ENCODE measurements at regions of chr11 and their contacts with region 1.

Region 1: GRCh38 chr11:64246871-64247728 is at the start of gene PPP1R14B:
- DNase-seq: peak; percentile 78
- ATAC-seq: peak; percentile 63
- H3K4me3 Mint-ChIP-seq: peak within 1 kb of the TSS; percentile 90
- H3K27ac Mint-ChIP-seq: peak within 1 kb of the TSS; percentile 87
- H3K4me1 Mint-ChIP-seq: peaks cover 43% of the 10 kb centered on the region
- H3K27me3 Mint-ChIP-seq: no peaks in the 10 kb centered on the region
- CTCF ChIP-seq: no peak
- total RNA-seq, gene PPP1R14B: 112 and 127 TPM in 2 replicates

Region 2: DNA sequence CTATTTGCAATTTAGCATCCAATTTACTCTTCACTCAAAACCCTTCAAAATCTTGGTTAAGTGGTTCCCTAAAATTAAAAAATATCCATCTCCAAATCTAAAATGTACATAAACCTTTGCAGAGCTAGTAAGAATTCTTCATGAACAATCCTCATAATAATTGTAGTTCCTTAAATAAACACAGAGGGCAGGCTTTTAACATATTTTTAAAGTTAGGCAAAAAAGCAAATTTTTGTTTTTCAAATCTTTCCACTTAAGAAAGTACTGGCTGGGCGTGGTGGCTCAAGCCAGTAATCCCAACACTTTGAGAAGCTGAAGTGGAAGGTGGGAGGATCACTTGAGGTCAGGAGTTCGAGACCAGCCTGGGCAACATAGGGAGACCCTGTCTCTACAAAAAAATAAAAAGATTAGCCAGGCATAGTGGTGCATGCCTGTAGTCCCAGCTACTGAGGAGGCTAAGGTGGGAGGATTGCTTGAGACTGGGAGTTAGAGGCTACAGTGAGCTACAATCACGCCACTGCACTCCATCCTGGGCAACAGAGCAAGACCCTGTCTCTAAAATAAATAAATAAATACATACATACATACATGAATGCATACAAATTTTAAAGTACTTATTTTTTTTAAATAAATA is 607.8 kb before region 1 on chr11:
- CTCF ChIA-PET with region 1: no interaction called
- POLR2A ChIA-PET with region 1: no interaction called
- intact Hi-C with region 1: no loop called
- DNase-seq: no peak
- ATAC-seq: no peak
- H3K4me3 Mint-ChIP-seq: no peak overlapping the region
- H3K27ac Mint-ChIP-seq: no peak overlapping the region
- H3K4me1 Mint-ChIP-seq: no peaks in the 10 kb centered on the region
- H3K27me3 Mint-ChIP-seq: no peaks in the 10 kb centered on the region
- CTCF ChIP-seq: no peak

Region 3: DNA sequence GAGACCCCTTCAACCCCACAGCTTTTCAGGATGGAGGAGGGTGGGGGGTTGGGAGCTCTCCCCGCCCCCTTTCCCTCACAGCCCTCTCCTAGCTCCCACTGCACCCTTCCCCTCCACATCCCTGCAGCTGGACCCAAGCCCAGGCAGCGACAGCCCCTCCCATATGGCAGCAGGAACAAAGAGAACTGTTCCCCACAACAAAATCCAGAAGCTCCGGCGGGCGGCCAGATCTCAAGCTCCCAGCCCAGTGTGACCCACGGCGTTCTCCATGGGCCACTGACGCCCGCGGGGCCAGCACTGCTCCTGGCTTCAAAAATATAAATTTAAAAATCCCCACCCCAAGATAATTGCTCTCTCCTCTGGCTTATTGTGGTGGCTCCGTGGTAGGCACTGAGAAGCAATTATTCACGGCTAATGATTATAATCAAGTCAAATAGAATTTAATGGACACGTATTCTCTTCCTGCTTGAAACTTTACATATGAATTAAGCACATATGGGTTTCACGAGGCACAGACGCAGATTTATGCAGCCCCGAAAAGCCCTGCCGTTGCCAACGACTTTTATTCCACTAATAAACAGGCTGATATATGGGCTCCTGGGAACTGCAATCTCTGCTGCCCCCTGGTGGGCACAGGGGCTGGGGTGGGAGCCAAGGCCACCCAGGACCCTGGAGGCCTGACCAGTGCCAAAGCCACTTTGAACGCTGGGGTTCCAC is 98.7 kb before region 1 on chr11:
- CTCF ChIA-PET with region 1: no interaction called
- POLR2A ChIA-PET with region 1: no interaction called
- intact Hi-C with region 1: no loop called
- DNase-seq: peak; percentile 78
- ATAC-seq: peak; percentile 47
- H3K4me3 Mint-ChIP-seq: no peak overlapping the region
- H3K27ac Mint-ChIP-seq: no peak overlapping the region
- H3K4me1 Mint-ChIP-seq: peaks cover 14% of the 10 kb centered on the region
- H3K27me3 Mint-ChIP-seq: no peaks in the 10 kb centered on the region
- CTCF ChIP-seq: peak; percentile 27

Region 4: GRCh38 chr11:64225612-64226506 is 21.2 kb before region 1 on chr11 and contains the starts of genes NUDT22 and TRPT1:
- CTCF ChIA-PET with region 1: no interaction called
- POLR2A ChIA-PET with region 1: interaction called, 60 read pairs
- intact Hi-C with region 1: loop called (anchors 1 kb)
- DNase-seq: peak; percentile 95
- ATAC-seq: peak; percentile 56
- H3K4me3 Mint-ChIP-seq: peak within 1 kb of the TSS; percentile 87
- H3K27ac Mint-ChIP-seq: peak within 1 kb of the TSS; percentile 81
- H3K4me1 Mint-ChIP-seq: peaks cover 39% of the 10 kb centered on the region
- H3K27me3 Mint-ChIP-seq: no peaks in the 10 kb centered on the region
- CTCF ChIP-seq: no peak
- total RNA-seq, gene NUDT22: 81.0 and 95.3 TPM in 2 replicates
- total RNA-seq, gene TRPT1: 50.6 and 51.3 TPM in 2 replicates

Region 5: DNA sequence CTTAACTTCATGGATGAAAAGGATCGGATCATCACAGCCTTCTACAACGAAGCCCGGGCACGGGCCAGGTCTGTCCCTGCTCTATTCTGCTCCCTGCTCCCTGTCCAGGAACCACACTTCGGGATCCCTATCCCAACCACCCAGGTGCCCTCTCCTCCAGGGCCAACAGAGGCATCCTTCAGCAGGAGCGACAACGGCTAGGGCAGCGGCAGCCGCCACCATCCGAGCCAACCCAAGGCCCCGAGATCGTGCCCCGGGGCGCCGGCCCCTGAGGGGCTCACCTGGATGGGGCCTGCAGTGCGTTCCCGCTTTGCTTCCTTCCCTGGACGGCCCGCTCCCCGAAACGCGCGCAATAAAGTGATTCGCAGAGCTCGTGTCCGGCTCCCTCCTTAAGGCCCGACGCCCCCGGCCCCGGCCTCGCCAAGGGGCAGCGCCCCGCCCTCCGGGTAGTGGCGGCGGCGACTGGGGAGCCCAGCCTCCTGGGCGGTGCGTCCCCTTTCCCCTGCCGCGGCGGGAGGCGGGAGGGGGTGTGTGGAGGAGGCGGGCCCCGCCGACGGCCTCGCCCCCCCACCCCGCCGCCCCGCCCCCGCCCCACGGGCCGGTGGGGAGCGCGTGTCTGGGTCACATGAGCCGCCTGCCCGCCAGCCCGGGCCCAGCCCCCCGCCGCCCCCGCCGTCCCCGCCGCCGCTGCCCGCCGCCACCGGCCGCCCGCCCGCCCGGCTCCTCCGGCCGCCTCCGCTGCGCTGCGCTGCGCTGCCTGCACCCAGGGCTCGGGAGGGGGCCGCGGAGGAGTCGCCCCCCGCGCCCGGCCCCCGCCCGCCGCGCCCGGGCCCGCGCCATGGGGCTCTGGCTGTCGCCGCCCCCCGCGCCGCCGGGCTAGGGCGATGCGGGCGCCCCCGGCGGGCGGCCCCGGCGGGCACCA is 12.9 kb before region 1 on chr11 and contains the start of gene VEGFB:
- CTCF ChIA-PET with region 1: interaction called, 3 read pairs
- POLR2A ChIA-PET with region 1: interaction called, 60 read pairs
- intact Hi-C with region 1: loop called (anchors 1 kb)
- DNase-seq: peak; percentile 65
- ATAC-seq: peak; percentile 49
- H3K4me3 Mint-ChIP-seq: peak within 1 kb of the TSS; percentile 90
- H3K27ac Mint-ChIP-seq: peak within 1 kb of the TSS; percentile 93
- H3K4me1 Mint-ChIP-seq: peaks cover 75% of the 10 kb centered on the region
- H3K27me3 Mint-ChIP-seq: no peaks in the 10 kb centered on the region
- CTCF ChIP-seq: no peak
- total RNA-seq, gene VEGFB: 86.7 and 97.4 TPM in 2 replicates

Region 6: DNA sequence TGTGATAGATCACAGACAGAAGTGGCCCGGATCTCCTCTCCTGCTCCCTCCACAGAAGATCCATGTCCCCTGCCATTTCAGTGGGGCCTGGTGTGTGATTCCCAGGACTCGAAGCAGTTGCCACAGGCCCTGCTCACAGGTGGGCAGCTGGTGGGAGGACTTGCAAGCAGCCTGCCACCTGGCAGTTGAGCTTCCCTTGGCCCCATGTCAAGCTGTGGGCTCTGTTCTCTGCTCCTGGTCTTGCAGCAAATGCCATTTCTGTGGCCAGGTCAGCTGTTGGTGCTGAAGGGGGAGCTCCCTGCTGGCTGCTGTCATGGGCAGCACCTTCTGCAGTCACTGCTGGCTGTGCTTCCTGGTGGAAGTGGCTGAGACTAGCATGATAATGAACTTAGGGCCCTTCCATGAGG is 284.8 kb after region 1 on chr11:
- CTCF ChIA-PET with region 1: no interaction called
- POLR2A ChIA-PET with region 1: no interaction called
- intact Hi-C with region 1: no loop called
- DNase-seq: no peak
- ATAC-seq: no peak
- H3K4me3 Mint-ChIP-seq: no peak overlapping the region
- H3K27ac Mint-ChIP-seq: no peak overlapping the region
- H3K4me1 Mint-ChIP-seq: no peaks in the 10 kb centered on the region
- H3K27me3 Mint-ChIP-seq: peaks cover 57% of the 10 kb centered on the region
- CTCF ChIP-seq: no peak

Region 7: GRCh38 chr11:65569973-65570918 is 1323.1 kb after region 1 on chr11 and contains the start of gene ZNRD2:
- CTCF ChIA-PET with region 1: no interaction called
- POLR2A ChIA-PET with region 1: no interaction called
- intact Hi-C with region 1: no loop called
- DNase-seq: peak; percentile 93
- ATAC-seq: peak; percentile 68
- H3K4me3 Mint-ChIP-seq: peak within 1 kb of the TSS; percentile 99
- H3K27ac Mint-ChIP-seq: peak within 1 kb of the TSS; percentile 99
- H3K4me1 Mint-ChIP-seq: peaks cover 78% of the 10 kb centered on the region
- H3K27me3 Mint-ChIP-seq: no peaks in the 10 kb centered on the region
- CTCF ChIP-seq: no peak
- total RNA-seq, gene ZNRD2: 40.9 and 41.0 TPM in 2 replicates

Measured in activated B cell treated with CpG ODN at 0.5 μM for 24 hours (primary cell).